Esophagus muscularis mucosa (tissue), 4 donors: ENCODE measurements at regions of chr16 and their contacts with region 1.

Region 1: DNA sequence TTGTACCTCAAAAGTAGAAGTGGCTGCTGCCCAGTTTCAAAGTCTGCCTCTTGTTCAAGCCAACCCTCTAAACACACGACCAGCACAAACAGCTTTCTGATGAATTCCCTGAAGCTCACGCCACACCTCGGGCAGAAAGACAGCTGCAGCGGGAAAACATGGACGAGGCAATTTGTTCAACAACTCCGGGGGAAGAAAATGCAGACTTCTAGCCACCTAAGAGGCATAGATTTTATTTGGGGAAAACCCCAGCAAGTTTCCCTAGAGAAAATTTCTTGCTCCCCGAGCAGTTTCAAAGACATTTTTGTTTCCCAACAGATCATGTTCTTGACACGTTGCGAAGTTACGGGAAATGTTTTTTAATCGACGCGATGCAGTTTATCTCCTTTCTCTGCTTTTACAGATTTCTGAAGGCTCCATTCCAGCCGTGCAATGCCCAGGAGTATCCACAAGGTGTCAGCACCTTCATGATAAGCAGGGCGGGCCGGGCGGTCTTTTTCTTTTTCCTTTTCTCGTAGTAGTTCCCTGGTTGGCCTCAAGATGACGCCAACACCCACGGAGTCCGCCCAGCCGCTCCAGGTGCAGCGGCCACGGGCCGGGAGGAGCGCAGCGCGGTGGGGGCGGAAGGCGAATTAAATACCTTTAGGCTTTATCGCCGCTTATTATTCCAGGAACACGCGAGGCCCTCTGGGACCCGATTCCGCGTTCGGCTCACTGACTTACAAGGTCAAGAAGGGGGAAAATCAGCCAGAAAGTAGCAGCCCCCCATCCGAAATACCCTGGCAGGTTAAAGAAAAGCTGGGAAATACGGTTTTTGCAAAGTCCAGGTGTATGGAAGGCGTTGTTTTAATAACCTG is 2.9 kb upstream of the FOXC2 start:
- DNase-seq: peak; percentile 97
- H3K4me3 ChIP-seq: peak overlapping the region; percentile 6 to 36 (median 12)
- H3K27ac ChIP-seq: no peak overlapping the region
- H3K4me1 ChIP-seq: peaks cover 5 to 47% (median 33%) of the 10 kb centered on the region in 4 donors
- H3K27me3 ChIP-seq: peaks cover 0 to 95% (median 41%) of the 10 kb centered on the region in 4 donors
- CTCF ChIP-seq: peak in 2 of 3 experiments; percentile 100
- EP300 ChIP-seq: no peak
- POLR2A ChIP-seq: no peak

Region 2: DNA sequence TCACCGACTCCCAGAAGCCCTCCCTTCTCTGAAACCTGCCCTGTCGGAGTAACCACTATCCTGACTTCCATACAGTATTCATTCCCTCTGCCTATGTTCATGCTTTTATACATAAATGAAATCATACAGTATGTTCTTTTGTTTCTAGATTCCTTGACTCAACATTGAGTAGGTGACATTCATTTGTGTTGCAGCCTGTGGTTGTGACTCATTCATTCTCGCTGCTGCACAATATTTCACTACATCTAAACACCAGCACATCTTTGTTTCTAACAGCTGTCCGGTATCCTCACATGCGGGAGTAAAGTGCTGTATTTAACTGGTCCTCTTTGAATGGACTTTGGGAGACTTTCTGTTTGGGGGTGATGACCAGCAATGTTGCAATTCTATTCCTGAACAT is 188.4 kb before region 1 on chr16:
- intact Hi-C with region 1: no loop called
- DNase-seq: no peak
- H3K4me3 ChIP-seq: no peak overlapping the region
- H3K27ac ChIP-seq: no peak overlapping the region
- H3K4me1 ChIP-seq: no peaks in the 10 kb centered on the region
- H3K27me3 ChIP-seq: no peaks in the 10 kb centered on the region
- CTCF ChIP-seq: no peak
- EP300 ChIP-seq: no peak
- POLR2A ChIP-seq: no peak

Region 3: DNA sequence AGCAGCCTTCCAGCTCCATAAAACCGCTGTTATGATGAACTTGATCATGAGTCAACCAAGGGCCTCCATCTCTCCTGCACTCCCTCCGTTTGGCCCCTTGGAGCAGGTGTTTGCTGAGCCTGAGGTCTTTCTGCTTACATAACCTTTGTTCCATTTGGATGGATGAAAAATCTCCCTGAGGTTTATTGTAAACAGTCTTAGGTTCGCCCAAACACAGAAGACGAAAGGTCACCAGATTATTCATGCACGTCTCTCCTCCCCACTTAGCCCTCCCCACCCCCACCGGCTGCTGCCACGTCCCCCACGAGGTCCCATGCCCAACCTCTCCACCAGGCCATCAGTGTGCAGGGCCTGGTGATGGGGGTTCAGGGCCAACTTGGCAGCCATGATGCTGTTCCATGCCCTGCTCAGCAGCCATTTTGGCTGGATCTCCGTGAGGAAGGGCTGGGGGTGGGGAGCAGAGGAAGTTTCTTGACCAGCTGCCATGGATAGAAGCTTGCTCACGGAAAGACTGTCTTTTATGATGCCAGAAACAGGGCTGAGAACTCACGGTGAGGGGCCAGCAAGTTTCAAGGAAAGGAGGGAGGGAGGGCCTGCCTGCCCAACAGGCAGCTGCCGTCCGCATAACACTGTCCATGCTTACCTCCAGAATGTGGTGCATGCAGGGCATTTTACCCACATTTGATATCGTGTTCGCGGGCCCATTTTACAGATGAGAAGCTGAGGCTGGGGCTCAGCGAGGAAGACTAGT is 101.2 kb before region 1 on chr16:
- intact Hi-C with region 1: no loop called
- DNase-seq: no peak
- H3K4me3 ChIP-seq: no peak overlapping the region
- H3K27ac ChIP-seq: peak overlapping the region; percentile 76 to 84 (median 80)
- H3K4me1 ChIP-seq: peaks cover 0 to 54% (median 48%) of the 10 kb centered on the region in 4 donors
- H3K27me3 ChIP-seq: peaks cover 0 to 4% (median 0%) of the 10 kb centered on the region in 4 donors
- CTCF ChIP-seq: peak in 1 of 3 experiments; percentile 46
- EP300 ChIP-seq: peak; percentile 17
- POLR2A ChIP-seq: no peak

Region 4: GRCh38 chr16:86498661-86499439 is 64.9 kb before region 1 on chr16:
- intact Hi-C with region 1: no loop called
- DNase-seq: no peak
- H3K4me3 ChIP-seq: peak overlapping the region; percentile 55 to 81 (median 64)
- H3K27ac ChIP-seq: peak overlapping the region; percentile 95 to 100 (median 98)
- H3K4me1 ChIP-seq: peaks cover 16 to 96% (median 92%) of the 10 kb centered on the region in 4 donors
- H3K27me3 ChIP-seq: peaks cover 0 to 77% (median 4%) of the 10 kb centered on the region in 4 donors
- CTCF ChIP-seq: no peak
- EP300 ChIP-seq: peak; percentile 63
- POLR2A ChIP-seq: peak; percentile 28

Region 5: GRCh38 chr16:86680162-86680561 is 116.4 kb after region 1 on chr16:
- intact Hi-C with region 1: no loop called
- DNase-seq: no peak
- H3K4me3 ChIP-seq: no peak overlapping the region
- H3K27ac ChIP-seq: peak overlapping the region in 2 of 4 donors; percentile 55 to 57
- H3K4me1 ChIP-seq: peaks cover 0 to 5% (median 2%) of the 10 kb centered on the region in 4 donors
- H3K27me3 ChIP-seq: peaks cover 0 to 70% (median 0%) of the 10 kb centered on the region in 4 donors
- CTCF ChIP-seq: no peak
- EP300 ChIP-seq: no peak
- POLR2A ChIP-seq: no peak

Region 6: DNA sequence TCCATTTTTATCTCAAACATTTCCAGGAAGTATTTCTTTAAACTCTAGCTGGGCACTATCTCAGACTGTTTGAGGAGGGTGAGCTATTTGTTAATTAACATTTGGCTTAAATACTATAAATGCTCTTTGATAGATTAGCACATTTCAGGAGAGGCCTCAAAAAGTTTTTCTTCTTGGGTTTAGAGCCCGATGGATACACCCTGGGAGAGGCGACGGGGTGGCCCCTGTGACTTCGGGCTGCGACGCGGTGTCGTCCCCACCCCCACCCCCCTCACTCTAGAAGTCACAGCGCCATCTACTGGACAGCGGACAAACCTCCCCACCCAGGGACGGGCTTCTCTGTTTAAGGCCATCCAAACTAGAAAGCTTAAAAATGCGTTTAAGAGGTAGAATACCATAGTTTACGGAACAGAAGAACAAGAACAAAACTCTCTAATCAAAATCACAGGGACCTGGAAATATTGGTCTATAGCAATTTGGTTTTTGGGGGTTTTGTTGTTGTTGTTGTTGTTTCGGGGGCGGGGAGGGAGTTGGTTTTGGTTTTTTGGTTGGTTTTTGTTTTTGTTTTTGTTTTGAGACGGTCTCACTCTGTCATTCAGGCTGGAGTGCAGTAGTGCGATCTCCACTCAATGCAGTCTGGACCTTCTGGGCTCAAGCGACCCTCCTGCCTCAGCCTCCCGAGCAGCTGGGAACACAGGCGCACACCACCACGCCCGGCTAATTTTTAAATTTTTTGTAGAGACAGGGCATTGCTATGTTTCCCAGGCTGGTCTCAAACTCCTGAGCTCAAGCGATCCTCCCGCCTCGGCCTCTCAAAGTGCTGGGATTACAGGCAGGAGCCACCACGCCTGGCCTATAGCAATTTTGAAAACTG is 499.1 kb after region 1 on chr16:
- intact Hi-C with region 1: loop called (anchors 2 kb)
- DNase-seq: no peak
- H3K4me3 ChIP-seq: no peak overlapping the region
- H3K27ac ChIP-seq: no peak overlapping the region
- H3K4me1 ChIP-seq: peaks cover 0 to 5% (median 0%) of the 10 kb centered on the region in 4 donors
- H3K27me3 ChIP-seq: peaks cover 0 to 82% (median 1%) of the 10 kb centered on the region in 4 donors
- CTCF ChIP-seq: peak; percentile 76 to 77 (median 77)
- EP300 ChIP-seq: no peak
- POLR2A ChIP-seq: no peak

Region 7: GRCh38 chr16:87278191-87279095 is 714.7 kb after region 1 on chr16:
- intact Hi-C with region 1: loop called (anchors 2 kb)
- DNase-seq: no peak
- H3K4me3 ChIP-seq: no peak overlapping the region
- H3K27ac ChIP-seq: no peak overlapping the region
- H3K4me1 ChIP-seq: peaks cover 0 to 9% (median 7%) of the 10 kb centered on the region in 4 donors
- H3K27me3 ChIP-seq: peaks cover 0 to 36% (median 0%) of the 10 kb centered on the region in 4 donors
- CTCF ChIP-seq: peak; percentile 78 to 86 (median 79)
- EP300 ChIP-seq: no peak
- POLR2A ChIP-seq: no peak